ENCODE measurements at regions of chr2 and their contacts with region 1.

Region 1: GRCh38 chr2:111640481-111640880 is 243.5 kb downstream of the ANAPC1 start:
- DNase-seq: no peak
- ATAC-seq: no peak
- H3K4me3 ChIP-seq: no peak overlapping the region
- H3K27ac ChIP-seq: no peak overlapping the region
- H3K4me1 ChIP-seq: no peaks in the 10 kb centered on the region
- H3K27me3 ChIP-seq: no peaks in the 10 kb centered on the region
- CTCF ChIP-seq: no peak

Region 2: DNA sequence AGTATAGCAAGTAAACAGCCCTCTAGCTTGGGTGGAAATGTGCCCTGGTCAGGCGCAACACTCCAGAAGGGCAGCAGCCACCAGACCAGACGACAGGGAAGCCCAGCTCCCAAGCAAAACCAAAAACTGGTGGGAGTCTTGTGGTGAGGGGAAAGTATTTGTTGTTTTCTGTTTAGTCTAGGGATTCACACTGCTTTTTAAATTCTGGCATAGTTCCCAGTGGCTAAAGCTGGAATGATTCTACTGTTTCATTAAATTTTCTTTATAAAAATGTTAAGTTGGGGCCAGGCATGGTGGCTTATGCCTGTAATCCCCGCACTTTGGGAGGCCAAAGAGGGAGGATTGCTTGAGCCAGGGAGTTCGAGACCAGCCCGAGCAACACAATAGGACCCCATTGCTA is 296.4 kb after region 1 on chr2:
- CTCF ChIA-PET with region 1: interaction called, 11 read pairs
- POLR2A ChIA-PET with region 1: no interaction called
- in situ Hi-C with region 1: no loop called
- intact Hi-C with region 1: no loop called
- DNase-seq: no peak
- ATAC-seq: no peak
- H3K4me3 ChIP-seq: no peak overlapping the region
- H3K27ac ChIP-seq: no peak overlapping the region
- H3K4me1 ChIP-seq: no peaks in the 10 kb centered on the region
- H3K27me3 ChIP-seq: no peaks in the 10 kb centered on the region
- CTCF ChIP-seq: no peak